Psoas muscle (tissue), 8 donors: ENCODE measurements at regions of chr2 and their contacts with region 1.

Region 1: GRCh38 chr2:230411570-230412370 is 4.2 kb upstream of the SP100 start:
- DNase-seq: peak; percentile 60 to 73
- ATAC-seq: peak; percentile 73 to 84 (median 74)
- H3K4me3 ChIP-seq: peak overlapping the region; percentile 84
- H3K27ac ChIP-seq: peak overlapping the region; percentile 80
- H3K4me1 ChIP-seq: peaks cover 10% of the 10 kb centered on the region
- H3K27me3 ChIP-seq: no peaks in the 10 kb centered on the region
- CTCF ChIP-seq: no peak

Region 2: DNA sequence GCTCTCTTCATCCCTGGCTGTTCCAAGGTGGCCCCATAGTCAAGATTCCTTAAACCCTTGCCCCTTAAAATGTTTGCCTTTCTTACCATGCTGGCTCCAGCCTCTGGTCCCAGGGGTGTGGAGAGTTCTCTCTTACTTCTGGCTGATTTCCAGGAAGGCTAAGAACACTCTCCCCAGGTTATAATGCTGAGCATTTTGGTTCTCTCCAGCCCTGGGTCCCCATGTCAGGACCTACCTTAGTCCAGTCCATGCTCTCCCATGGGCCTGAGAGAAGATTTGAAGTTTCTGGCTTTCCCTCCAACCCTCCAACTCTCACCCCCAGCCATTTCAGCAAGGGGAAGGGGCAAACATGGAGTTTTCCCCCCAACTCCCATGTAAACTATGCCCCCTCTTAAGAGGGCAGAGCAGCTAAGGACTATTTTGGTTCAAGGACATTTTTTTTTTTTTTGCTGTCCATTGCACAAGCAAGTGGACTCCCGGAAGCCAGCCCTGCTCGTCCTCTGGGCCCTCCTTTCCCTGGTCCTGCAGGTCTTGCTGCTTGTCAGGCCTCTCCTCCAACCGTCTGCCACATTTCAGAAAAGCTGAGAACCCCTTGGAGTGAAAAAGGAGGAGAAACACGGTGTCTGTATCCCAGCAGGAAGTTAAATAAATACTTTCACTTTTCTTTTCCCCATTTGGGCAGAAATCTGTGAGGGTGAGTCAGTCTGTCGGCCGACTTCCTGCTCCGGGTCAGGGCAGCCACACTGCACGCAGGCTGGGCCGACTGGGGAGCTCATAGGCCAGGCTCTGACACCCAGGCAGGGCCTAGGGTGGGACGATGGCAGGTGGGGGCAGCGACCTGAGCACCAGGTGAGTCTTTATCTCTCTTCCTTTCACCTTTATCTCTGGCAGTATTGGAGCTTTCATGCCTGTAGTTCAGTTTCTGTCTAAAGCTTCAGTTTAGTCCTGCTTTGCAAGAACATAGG is 85.0 kb before region 1 on chr2 and contains the start of gene SP140L:
- intact Hi-C with region 1: loop called in 1 of 2 experiments (anchors 5 kb)
- DNase-seq: peak; percentile 70 to 81
- ATAC-seq: peak; percentile 66 to 93 (median 83)
- H3K4me3 ChIP-seq: peak within 1 kb of the TSS; percentile 68
- H3K27ac ChIP-seq: peak within 1 kb of the TSS; percentile 64
- H3K4me1 ChIP-seq: peaks cover 8% of the 10 kb centered on the region
- H3K27me3 ChIP-seq: no peaks in the 10 kb centered on the region
- CTCF ChIP-seq: no peak
- total RNA-seq, gene SP140L: 3.5 to 5.3 (median 3.8) TPM